PC-9 (cell line): ENCODE measurements at regions of chr3 and their contacts with region 1.

Region 1: DNA sequence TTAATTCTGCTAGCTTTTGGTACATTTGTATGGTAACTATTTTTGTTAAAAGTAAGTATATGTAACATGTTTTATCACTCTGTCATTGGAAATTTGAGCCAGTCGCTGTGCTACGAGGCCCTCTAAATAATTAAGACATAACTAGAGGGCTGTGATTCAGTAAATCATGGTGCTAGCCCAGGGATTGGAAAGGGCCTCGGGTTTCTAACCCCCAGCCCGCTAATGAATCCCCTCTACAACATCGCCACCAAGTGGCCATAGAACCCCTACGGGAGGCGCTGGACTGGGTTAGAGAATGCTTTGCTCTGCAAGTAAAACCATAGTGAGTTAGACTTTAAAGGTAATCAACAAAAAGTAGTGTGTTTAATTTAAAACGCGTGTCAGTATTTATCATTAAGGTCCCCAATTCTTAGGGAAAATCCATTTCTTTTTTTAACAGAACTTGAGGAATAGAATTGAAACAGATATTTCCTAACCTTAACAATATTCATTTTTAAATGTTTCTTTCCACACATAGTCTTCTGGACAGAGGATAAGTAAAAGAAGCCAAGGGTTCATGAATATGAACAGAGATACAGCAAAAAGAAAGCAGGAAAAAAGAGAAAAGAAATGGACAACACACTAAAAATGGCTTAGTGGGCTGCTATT is 744.7 kb downstream of the EPHA3 start:
- DNase-seq: peak in 1 of 2 experiments; percentile 25
- H3K4me3 ChIP-seq: no peak overlapping the region
- H3K27ac ChIP-seq: no peak overlapping the region
- H3K4me1 ChIP-seq: no peaks in the 10 kb centered on the region
- H3K27me3 ChIP-seq: no peaks in the 10 kb centered on the region
- CTCF ChIP-seq: peak; percentile 69

Region 2: GRCh38 chr3:88203642-88204055 is 1648.4 kb before region 1 on chr3:
- CTCF ChIA-PET with region 1: no interaction called
- POLR2A ChIA-PET with region 1: no interaction called
- intact Hi-C with region 1: loop called (anchors 1 kb)
- DNase-seq: peak in 1 of 2 experiments; percentile 59
- H3K4me3 ChIP-seq: no peak overlapping the region
- H3K27ac ChIP-seq: no peak overlapping the region
- H3K4me1 ChIP-seq: no peaks in the 10 kb centered on the region
- H3K27me3 ChIP-seq: no peaks in the 10 kb centered on the region
- CTCF ChIP-seq: peak; percentile 84